Activated B cell treated with CpG ODN at 0.5 μM for 24 hours (primary cell): ENCODE measurements at regions of chr6 and their contacts with region 1.

Region 1: DNA sequence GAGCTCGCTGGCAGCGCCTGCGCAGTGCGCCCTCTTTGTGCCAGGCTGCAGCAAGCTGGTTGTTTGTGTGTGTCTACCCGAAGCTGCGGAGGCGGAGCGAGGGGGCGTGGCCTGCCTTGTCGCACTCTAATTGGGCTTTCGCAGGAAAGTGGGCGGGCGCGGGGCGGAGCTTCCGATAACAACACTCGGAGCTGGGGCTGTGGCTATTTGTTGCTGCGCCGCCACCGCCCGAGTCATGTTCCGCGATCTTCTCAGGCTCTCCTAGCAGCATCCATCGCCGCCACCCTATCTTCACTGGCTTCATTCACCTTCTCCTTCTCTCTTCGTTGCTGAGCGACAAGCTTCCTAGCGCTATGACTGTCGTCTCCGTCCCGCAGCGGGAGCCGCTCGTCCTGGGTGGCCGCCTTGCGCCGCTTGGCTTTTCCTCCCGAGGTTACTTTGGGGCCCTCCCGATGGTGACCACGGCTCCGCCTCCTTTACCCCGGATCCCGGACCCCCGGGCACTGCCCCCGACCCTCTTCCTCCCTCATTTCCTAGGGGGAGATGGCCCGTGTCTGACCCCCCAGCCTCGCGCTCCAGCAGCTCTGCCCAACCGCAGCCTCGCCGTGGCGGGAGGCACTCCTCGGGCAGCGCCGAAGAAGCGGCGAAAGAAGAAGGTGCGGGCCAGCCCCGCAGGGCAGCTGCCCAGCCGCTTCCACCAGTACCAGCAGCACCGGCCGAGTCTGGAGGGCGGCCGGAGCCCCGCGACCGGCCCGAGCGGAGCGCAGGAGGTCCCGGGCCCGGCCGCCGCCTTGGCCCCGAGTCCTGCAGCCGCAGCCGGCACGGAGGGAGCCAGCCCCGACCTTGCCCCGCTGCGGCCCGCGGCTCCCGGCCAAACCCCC is at the start of gene PNRC1:
- DNase-seq: peak; percentile 100
- ATAC-seq: peak; percentile 77
- H3K4me3 Mint-ChIP-seq: peak within 1 kb of the TSS; percentile 95
- H3K27ac Mint-ChIP-seq: peak within 1 kb of the TSS; percentile 99
- H3K4me1 Mint-ChIP-seq: peaks cover 39% of the 10 kb centered on the region
- H3K27me3 Mint-ChIP-seq: no peaks in the 10 kb centered on the region
- CTCF ChIP-seq: no peak
- total RNA-seq, gene PNRC1: 220 and 229 TPM in 2 replicates

Region 2: GRCh38 chr6:87154993-87155841 is 1925.6 kb before region 1 on chr6 and contains the start of gene ZNF292:
- CTCF ChIA-PET with region 1: no interaction called
- POLR2A ChIA-PET with region 1: interaction called, 3 read pairs
- intact Hi-C with region 1: loop called (anchors 1 kb)
- DNase-seq: peak; percentile 94
- ATAC-seq: peak; percentile 85
- H3K4me3 Mint-ChIP-seq: peak within 1 kb of the TSS; percentile 91
- H3K27ac Mint-ChIP-seq: peak within 1 kb of the TSS; percentile 97
- H3K4me1 Mint-ChIP-seq: peaks cover 57% of the 10 kb centered on the region
- H3K27me3 Mint-ChIP-seq: no peaks in the 10 kb centered on the region
- CTCF ChIP-seq: no peak
- total RNA-seq, gene ZNF292: 54.8 and 66.6 TPM in 2 replicates

Region 3: GRCh38 chr6:88963139-88964090 is 117.4 kb before region 1 on chr6 and contains the start of gene RNGTT:
- CTCF ChIA-PET with region 1: no interaction called
- POLR2A ChIA-PET with region 1: interaction called, 67 read pairs
- intact Hi-C with region 1: loop called (anchors 1 kb)
- DNase-seq: peak; percentile 96
- ATAC-seq: peak; percentile 100
- H3K4me3 Mint-ChIP-seq: peak within 1 kb of the TSS; percentile 99
- H3K27ac Mint-ChIP-seq: peak within 1 kb of the TSS; percentile 95
- H3K4me1 Mint-ChIP-seq: peaks cover 42% of the 10 kb centered on the region
- H3K27me3 Mint-ChIP-seq: no peaks in the 10 kb centered on the region
- CTCF ChIP-seq: no peak
- total RNA-seq, gene RNGTT: 24.8 and 25.9 TPM in 2 replicates

Region 4: GRCh38 chr6:89145787-89146646 is 65.2 kb after region 1 on chr6 and contains the start of gene PM20D2:
- CTCF ChIA-PET with region 1: interaction called, 3 read pairs
- POLR2A ChIA-PET with region 1: interaction called, 158 read pairs
- intact Hi-C with region 1: loop called (anchors 1 kb)
- DNase-seq: peak; percentile 72
- ATAC-seq: peak; percentile 78
- H3K4me3 Mint-ChIP-seq: peak within 1 kb of the TSS; percentile 90
- H3K27ac Mint-ChIP-seq: peak within 1 kb of the TSS; percentile 92
- H3K4me1 Mint-ChIP-seq: peaks cover 22% of the 10 kb centered on the region
- H3K27me3 Mint-ChIP-seq: no peaks in the 10 kb centered on the region
- CTCF ChIP-seq: no peak
- total RNA-seq, gene PM20D2: 10.9 and 11.6 TPM in 2 replicates

Region 5: GRCh38 chr6:89371849-89372505 is 291.2 kb after region 1 on chr6:
- CTCF ChIA-PET with region 1: interaction called, 4 read pairs
- POLR2A ChIA-PET with region 1: interaction called, 13 read pairs
- intact Hi-C with region 1: no loop called
- DNase-seq: peak; percentile 74
- ATAC-seq: peak; percentile 93
- H3K4me3 Mint-ChIP-seq: no peak overlapping the region
- H3K27ac Mint-ChIP-seq: no peak overlapping the region
- H3K4me1 Mint-ChIP-seq: peaks cover 41% of the 10 kb centered on the region
- H3K27me3 Mint-ChIP-seq: no peaks in the 10 kb centered on the region
- CTCF ChIP-seq: peak; percentile 49

Region 6: GRCh38 chr6:89729818-89730217 is 649.0 kb after region 1 on chr6:
- CTCF ChIA-PET with region 1: no interaction called
- POLR2A ChIA-PET with region 1: no interaction called
- intact Hi-C with region 1: no loop called
- DNase-seq: no peak
- ATAC-seq: no peak
- H3K4me3 Mint-ChIP-seq: no peak overlapping the region
- H3K27ac Mint-ChIP-seq: no peak overlapping the region
- H3K4me1 Mint-ChIP-seq: no peaks in the 10 kb centered on the region
- H3K27me3 Mint-ChIP-seq: no peaks in the 10 kb centered on the region
- CTCF ChIP-seq: no peak

Region 7: DNA sequence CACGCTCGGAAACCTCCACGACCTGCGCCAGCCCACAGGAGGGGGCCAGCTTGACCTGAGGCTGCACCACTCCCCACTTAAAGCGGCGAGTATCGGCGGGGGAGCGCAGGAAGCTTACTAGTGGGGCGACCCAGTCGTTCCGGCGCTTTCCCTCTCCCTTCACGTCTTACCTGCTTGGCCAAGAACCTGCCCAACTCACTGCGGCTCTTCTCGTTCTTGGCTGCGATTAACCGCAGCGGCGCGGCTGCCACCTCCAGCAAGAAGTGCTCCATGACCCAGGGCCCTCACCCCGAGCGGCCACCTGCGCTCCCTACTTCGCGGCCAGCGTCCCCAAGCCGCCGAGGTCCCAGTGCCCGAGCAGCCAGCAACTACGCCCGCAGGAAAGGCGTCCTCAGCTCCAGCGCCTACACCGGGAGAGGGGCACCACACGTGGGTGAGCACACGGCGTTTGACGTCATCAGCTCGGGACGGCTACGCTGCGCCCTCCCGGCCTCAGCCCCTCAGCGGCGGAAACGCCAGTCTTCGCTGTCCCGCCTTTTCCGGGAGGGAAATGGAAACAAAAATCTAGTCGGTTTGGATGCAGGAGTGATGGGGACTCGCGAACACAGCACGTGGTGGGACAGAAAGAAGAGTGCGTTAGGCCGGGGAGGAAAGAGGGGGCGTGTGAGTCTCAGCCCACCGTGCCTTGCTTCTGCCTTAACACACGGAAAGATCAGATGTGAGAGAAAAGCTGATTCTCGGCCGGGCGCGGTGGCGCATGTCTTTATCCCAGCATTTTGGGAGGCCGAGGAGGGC is 738.8 kb after region 1 on chr6 and contains the start of gene MDN1:
- CTCF ChIA-PET with region 1: no interaction called
- POLR2A ChIA-PET with region 1: interaction called, 3 read pairs
- intact Hi-C with region 1: loop called (anchors 1 kb)
- DNase-seq: peak; percentile 76
- ATAC-seq: peak; percentile 94
- H3K4me3 Mint-ChIP-seq: peak within 1 kb of the TSS; percentile 95
- H3K27ac Mint-ChIP-seq: peak within 1 kb of the TSS; percentile 95
- H3K4me1 Mint-ChIP-seq: peaks cover 33% of the 10 kb centered on the region
- H3K27me3 Mint-ChIP-seq: no peaks in the 10 kb centered on the region
- CTCF ChIP-seq: no peak
- total RNA-seq, gene MDN1: 59.8 and 65.4 TPM in 2 replicates